MCF 10A (cell line): ENCODE measurements at regions of chr20 and their contacts with region 1.

Region 1: GRCh38 chr20:50844430-50845100 is 49.7 kb downstream of the BCAS4 start:
- DNase-seq: peak; percentile 98
- H3K4me3 Mint-ChIP-seq: no peak overlapping the region
- H3K27ac Mint-ChIP-seq: peak overlapping the region; percentile 16
- H3K4me1 Mint-ChIP-seq: peaks cover 36% of the 10 kb centered on the region
- H3K27me3 Mint-ChIP-seq: no peaks in the 10 kb centered on the region
- CTCF ChIP-seq: no peak

Region 2: GRCh38 chr20:50824193-50824632 is 20.4 kb before region 1 on chr20:
- CTCF ChIA-PET with region 1: interaction called, 15 read pairs
- POLR2A ChIA-PET with region 1: interaction called, 13 read pairs
- intact Hi-C with region 1: no loop called
- DNase-seq: peak; percentile 89
- H3K4me3 Mint-ChIP-seq: no peak overlapping the region
- H3K27ac Mint-ChIP-seq: peak overlapping the region; percentile 40
- H3K4me1 Mint-ChIP-seq: peaks cover 9% of the 10 kb centered on the region
- H3K27me3 Mint-ChIP-seq: no peaks in the 10 kb centered on the region
- CTCF ChIP-seq: no peak

Region 3: GRCh38 chr20:50856036-50856756 is 11.6 kb after region 1 on chr20:
- CTCF ChIA-PET with region 1: interaction called, 4 read pairs
- POLR2A ChIA-PET with region 1: interaction called, 89 read pairs
- intact Hi-C with region 1: no loop called
- DNase-seq: peak; percentile 79
- H3K4me3 Mint-ChIP-seq: no peak overlapping the region
- H3K27ac Mint-ChIP-seq: peak overlapping the region; percentile 67
- H3K4me1 Mint-ChIP-seq: peaks cover 19% of the 10 kb centered on the region
- H3K27me3 Mint-ChIP-seq: no peaks in the 10 kb centered on the region
- CTCF ChIP-seq: no peak

Region 4: GRCh38 chr20:50913690-50914375 is 69.3 kb after region 1 on chr20:
- CTCF ChIA-PET with region 1: interaction called, 4 read pairs
- POLR2A ChIA-PET with region 1: interaction called, 28 read pairs
- intact Hi-C with region 1: no loop called
- DNase-seq: peak; percentile 68
- H3K4me3 Mint-ChIP-seq: no peak overlapping the region
- H3K27ac Mint-ChIP-seq: peak overlapping the region; percentile 6
- H3K4me1 Mint-ChIP-seq: peaks cover 57% of the 10 kb centered on the region
- H3K27me3 Mint-ChIP-seq: no peaks in the 10 kb centered on the region
- CTCF ChIP-seq: no peak

Region 5: DNA sequence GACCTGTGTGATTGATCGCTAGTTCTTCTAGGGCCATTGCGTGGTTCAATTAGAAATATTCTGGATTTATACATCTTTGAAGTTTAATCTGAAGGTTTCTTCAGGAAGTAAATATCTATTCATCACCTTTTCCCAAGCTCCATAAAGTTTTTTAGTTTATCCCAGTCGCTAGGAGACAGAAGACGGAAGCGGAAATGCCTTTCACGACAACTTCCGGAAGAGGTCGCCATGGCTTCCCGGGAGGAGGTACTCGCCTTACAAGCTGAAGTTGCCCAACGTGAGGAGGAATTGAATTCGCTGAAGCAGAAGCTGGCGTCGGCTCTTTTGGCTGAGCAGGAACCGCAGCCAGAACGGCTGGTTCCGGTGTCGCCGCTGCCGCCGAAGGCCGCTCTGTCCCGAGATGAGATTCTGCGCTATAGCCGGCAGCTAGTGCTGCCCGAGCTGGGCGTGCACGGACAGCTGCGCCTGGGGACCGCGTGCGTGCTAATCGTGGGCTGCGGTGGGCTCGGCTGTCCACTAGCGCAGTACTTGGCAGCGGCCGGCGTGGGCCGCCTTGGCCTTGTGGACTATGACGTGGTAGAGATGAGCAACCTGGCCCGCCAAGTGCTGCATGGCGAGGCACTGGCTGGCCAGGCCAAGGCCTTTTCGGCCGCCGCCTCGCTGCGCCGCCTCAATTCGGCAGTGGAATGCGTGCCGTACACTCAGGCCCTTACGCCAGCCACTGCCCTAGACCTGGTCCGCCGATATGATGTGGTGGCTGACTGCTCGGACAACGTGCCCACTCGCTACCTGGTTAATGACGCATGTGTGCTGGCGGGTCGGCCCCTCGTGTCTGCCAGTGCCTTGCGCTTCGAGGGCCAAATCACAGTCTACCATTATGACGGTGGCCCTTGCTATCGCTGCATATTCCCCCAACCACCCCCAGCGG is 114.3 kb after region 1 on chr20 and contains the start of gene MOCS3:
- CTCF ChIA-PET with region 1: interaction called, 3 read pairs
- POLR2A ChIA-PET with region 1: interaction called, 44 read pairs
- intact Hi-C with region 1: no loop called
- DNase-seq: peak; percentile 92
- H3K4me3 Mint-ChIP-seq: peak within 1 kb of the TSS; percentile 91
- H3K27ac Mint-ChIP-seq: peak within 1 kb of the TSS; percentile 100
- H3K4me1 Mint-ChIP-seq: peaks cover 15% of the 10 kb centered on the region
- H3K27me3 Mint-ChIP-seq: no peaks in the 10 kb centered on the region
- CTCF ChIP-seq: no peak
- total RNA-seq, gene MOCS3: 5.8 and 6.0 TPM in 2 replicates